ENCODE measurements at regions of chr1 and their contacts with region 1.

Region 1: GRCh38 chr1:20696397-20697329 is 21.1 kb downstream of the KIF17 start:
- DNase-seq: peak; percentile 86
- H3K4me3 ChIP-seq: peak overlapping the region; percentile 34 to 45 (median 38)
- H3K27ac ChIP-seq: peak overlapping the region; percentile 44
- H3K4me1 ChIP-seq: peaks cover 4% of the 10 kb centered on the region
- H3K27me3 ChIP-seq: no peaks in the 10 kb centered on the region
- CTCF ChIP-seq: peak; percentile 65 to 96
- POLR2A ChIP-seq: no peak

Region 2: DNA sequence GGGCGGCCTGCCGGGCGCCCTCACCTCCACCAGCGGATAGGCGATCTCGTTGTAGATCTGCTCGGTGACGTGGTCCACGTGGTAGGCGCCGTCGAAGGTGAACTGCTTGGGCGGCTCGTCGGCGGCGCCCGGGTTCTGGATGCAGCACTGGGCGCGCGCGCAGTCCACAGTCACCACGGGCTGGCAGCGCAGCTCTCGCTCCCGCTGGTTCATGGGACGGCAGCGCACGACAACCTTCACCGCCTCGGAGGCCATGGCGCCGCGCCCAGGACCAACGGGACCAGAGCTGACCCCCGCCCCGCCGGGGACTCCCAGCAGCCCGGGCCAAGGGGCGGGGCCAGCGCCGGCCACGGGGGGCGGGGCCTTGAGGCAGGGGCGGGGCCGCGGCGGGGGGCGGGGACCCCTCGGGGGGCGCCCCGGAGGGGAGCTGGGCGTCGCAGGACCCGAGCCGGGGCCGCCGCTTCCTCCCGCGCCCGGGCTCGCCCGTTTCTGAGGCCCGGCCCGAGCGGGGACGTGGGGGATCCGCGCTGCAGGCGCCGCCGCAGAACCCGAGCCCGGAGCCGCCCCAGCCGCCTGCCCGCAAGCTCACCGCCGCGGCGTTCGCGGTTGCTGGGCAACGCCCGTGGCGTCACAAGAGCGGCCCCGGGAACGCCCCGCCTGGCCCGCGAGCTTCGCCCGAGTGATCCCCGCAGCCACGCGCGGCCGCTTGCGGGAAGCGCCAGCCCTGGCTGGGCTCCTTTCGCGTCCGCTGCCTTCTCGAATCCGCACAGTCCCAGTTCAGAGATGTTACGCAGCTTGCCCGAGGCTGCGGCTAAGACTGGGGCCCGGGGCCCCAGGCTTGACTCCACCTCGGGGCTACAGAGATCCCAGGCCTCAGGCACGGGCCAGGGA is 21.0 kb after region 1 on chr1 and contains the start of gene KIF17:
- CTCF ChIA-PET with region 1: interaction called, 14 read pairs
- POLR2A ChIA-PET with region 1: no interaction called
- dilution Hi-C with region 1: no loop called
- intact Hi-C with region 1: no loop called
- DNase-seq: peak; percentile 58
- H3K4me3 ChIP-seq: peak within 1 kb of the TSS in 1 of 3 experiments; percentile 25
- H3K27ac ChIP-seq: no peak within 1 kb of the TSS
- H3K4me1 ChIP-seq: no peaks in the 10 kb centered on the region
- H3K27me3 ChIP-seq: peaks cover 0 to 5% of the 10 kb centered on the region in 2 experiments
- CTCF ChIP-seq: no peak
- POLR2A ChIP-seq: no peak
- total RNA-seq, gene KIF17: 0.72 and 1.5 TPM in 2 replicates

Region 3: GRCh38 chr1:20732588-20733360 is 36.1 kb after region 1 on chr1 and contains the start of gene SH2D5:
- CTCF ChIA-PET with region 1: interaction called, 18 read pairs
- POLR2A ChIA-PET with region 1: no interaction called
- dilution Hi-C with region 1: no loop called
- intact Hi-C with region 1: loop called (anchors 1 kb)
- DNase-seq: peak; percentile 87
- H3K4me3 ChIP-seq: peak within 1 kb of the TSS; percentile 27 to 57 (median 42)
- H3K27ac ChIP-seq: peak within 1 kb of the TSS; percentile 56
- H3K4me1 ChIP-seq: peaks cover 14% of the 10 kb centered on the region
- H3K27me3 ChIP-seq: peaks cover 7 to 16% of the 10 kb centered on the region in 2 experiments
- CTCF ChIP-seq: peak; percentile 20 to 33
- POLR2A ChIP-seq: no peak
- total RNA-seq, gene SH2D5: 1.0 and 2.4 TPM in 2 replicates

Region 4: DNA sequence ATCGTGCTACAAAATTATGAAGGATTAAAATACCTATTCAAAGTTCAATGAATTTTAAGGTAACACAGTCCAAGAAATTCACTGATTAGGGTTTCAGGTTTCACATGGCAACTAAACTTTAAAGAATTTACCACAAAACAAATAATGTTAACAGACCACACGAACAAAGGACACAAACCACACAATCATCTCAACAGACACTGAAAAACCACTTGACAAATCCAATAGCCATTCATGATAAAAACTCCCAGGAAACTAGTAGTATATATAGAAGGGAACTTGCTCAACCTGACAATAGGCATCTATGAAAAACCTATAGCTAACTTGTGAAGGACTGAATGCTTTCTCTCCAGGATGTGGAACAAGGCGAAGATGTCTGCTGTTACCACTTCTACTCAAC is 56.9 kb after region 1 on chr1:
- CTCF ChIA-PET with region 1: no interaction called
- POLR2A ChIA-PET with region 1: no interaction called
- dilution Hi-C with region 1: no loop called
- intact Hi-C with region 1: no loop called
- DNase-seq: no peak
- H3K4me3 ChIP-seq: no peak overlapping the region
- H3K27ac ChIP-seq: no peak overlapping the region
- H3K4me1 ChIP-seq: no peaks in the 10 kb centered on the region
- H3K27me3 ChIP-seq: no peaks in the 10 kb centered on the region
- CTCF ChIP-seq: no peak
- POLR2A ChIP-seq: no peak

Region 5: DNA sequence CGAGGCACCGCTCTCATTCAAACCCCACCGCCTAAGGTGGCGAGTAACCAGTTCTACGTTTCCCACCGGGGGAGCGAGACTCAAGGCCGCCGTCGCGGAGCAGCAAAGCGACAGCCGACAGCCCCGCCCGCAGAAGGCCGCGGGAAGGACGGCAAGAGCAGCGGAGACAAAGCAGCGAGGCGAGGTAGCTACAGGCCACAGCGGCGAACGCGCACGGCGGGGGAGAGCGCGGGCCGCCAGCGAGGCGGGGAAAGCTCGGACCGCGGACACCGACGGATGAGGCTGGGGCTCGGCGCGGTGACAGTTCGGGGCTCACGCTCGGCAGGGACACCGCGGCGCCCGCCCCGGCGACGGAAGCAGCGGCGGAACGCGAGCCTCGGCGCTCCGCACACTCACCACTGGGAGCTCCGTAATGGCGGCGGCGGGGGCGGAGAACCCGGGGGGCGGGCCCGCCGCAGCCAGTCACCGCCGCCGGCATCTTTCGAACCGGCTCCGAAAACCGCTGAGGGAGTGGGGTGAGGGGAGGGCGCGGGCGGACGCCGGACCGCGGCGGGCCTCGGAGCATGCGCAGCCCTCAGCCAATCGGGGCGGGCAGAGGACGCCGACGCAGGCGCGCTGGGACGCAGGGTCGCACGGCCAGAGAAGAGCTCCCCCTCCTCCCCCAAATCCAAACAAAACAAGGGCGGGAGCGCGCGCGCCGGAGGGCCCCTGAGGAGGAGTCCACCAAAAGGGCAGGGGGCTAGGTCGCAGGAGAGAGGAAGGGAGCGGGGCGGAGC is 89.8 kb after region 1 on chr1:
- CTCF ChIA-PET with region 1: interaction called, 10 read pairs
- POLR2A ChIA-PET with region 1: no interaction called
- dilution Hi-C with region 1: no loop called
- intact Hi-C with region 1: loop called (anchors 5 kb)
- DNase-seq: peak; percentile 96
- H3K4me3 ChIP-seq: peak overlapping the region; percentile 32 to 90 (median 83)
- H3K27ac ChIP-seq: peak overlapping the region; percentile 89
- H3K4me1 ChIP-seq: peaks cover 13% of the 10 kb centered on the region
- H3K27me3 ChIP-seq: no peaks in the 10 kb centered on the region
- CTCF ChIP-seq: no peak
- POLR2A ChIP-seq: peak; percentile 69

Region 6: DNA sequence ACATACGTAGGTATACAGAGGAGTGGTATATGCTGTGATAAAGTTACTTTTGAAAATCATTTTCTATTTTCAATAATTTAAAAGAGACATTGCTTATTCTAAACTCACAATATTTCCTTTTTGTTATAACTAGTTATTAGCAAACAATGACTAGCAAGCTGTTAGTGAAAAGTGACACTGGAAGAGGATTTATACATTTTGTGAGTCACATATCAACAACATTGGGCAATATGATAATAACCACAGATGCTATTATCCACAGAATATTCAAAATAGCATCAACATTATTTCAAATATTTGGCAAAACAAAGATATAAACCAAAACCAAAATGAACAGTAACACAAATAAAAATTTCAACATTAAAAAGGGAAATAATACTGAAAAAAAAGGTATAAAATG is 194.4 kb after region 1 on chr1:
- CTCF ChIA-PET with region 1: no interaction called
- POLR2A ChIA-PET with region 1: no interaction called
- dilution Hi-C with region 1: no loop called
- intact Hi-C with region 1: no loop called
- DNase-seq: no peak
- H3K4me3 ChIP-seq: no peak overlapping the region
- H3K27ac ChIP-seq: no peak overlapping the region
- H3K4me1 ChIP-seq: no peaks in the 10 kb centered on the region
- H3K27me3 ChIP-seq: no peaks in the 10 kb centered on the region
- CTCF ChIP-seq: no peak
- POLR2A ChIP-seq: no peak

Region 7: GRCh38 chr1:21216835-21217811 is 520.5 kb after region 1 on chr1:
- CTCF ChIA-PET with region 1: interaction called, 13 read pairs
- POLR2A ChIA-PET with region 1: no interaction called
- dilution Hi-C with region 1: no loop called
- intact Hi-C with region 1: no loop called
- DNase-seq: peak; percentile 50
- H3K4me3 ChIP-seq: no peak overlapping the region
- H3K27ac ChIP-seq: no peak overlapping the region
- H3K4me1 ChIP-seq: peaks cover 6% of the 10 kb centered on the region
- H3K27me3 ChIP-seq: no peaks in the 10 kb centered on the region
- CTCF ChIP-seq: peak; percentile 70 to 86
- POLR2A ChIP-seq: no peak

Measured in endothelial cell of umbilical vein (primary cell).